AG04449 (cell line): ENCODE measurements at regions of chr12 and their contacts with region 1.

Region 1: DNA sequence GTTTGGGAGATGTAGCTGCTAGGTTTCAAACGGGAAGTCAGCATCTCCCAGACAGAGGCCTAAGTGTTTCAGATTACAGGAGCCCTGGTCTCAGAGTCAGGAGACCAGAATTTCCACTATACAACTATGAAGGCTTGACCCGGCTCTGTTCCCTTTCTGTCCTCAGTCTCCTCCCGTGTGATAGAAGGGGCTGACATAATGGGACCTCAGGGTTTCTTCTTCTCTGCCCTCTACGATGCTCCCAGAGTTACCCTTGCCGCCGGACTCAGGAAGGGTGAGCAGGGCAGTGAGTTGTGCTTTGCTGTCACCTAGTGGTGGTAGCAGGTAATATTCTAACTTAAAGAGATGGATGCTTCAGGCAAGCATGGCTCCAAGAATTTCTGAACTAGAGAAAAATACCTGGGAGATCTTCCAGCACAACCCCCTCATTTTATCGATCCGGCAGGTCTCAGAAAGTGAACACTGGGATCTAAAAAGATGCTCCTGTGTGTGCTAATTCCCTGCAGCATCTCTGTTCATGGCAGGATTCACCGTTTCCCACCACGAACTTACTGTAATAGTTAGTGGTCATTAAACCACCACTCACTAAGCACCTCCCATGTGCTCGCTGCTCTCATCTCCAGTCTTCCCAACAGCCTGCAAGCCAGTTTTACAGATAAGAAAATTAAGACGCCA is 84.4 kb downstream of the VWF start:
- DNase-seq: no peak
- H3K4me3 ChIP-seq: no peak overlapping the region
- CTCF ChIP-seq: peak; percentile 79

Region 2: GRCh38 chr12:5965950-5966383 is 74.1 kb before region 1 on chr12:
- CTCF ChIA-PET with region 1: interaction called, 63 read pairs
- POLR2A ChIA-PET with region 1: no interaction called
- DNase-seq: no peak
- H3K4me3 ChIP-seq: no peak overlapping the region
- CTCF ChIP-seq: peak; percentile 94

Region 3: GRCh38 chr12:5973461-5974130 is 66.4 kb before region 1 on chr12:
- CTCF ChIA-PET with region 1: interaction called, 57 read pairs
- POLR2A ChIA-PET with region 1: no interaction called
- DNase-seq: no peak
- H3K4me3 ChIP-seq: no peak overlapping the region
- CTCF ChIP-seq: no peak

Region 4: DNA sequence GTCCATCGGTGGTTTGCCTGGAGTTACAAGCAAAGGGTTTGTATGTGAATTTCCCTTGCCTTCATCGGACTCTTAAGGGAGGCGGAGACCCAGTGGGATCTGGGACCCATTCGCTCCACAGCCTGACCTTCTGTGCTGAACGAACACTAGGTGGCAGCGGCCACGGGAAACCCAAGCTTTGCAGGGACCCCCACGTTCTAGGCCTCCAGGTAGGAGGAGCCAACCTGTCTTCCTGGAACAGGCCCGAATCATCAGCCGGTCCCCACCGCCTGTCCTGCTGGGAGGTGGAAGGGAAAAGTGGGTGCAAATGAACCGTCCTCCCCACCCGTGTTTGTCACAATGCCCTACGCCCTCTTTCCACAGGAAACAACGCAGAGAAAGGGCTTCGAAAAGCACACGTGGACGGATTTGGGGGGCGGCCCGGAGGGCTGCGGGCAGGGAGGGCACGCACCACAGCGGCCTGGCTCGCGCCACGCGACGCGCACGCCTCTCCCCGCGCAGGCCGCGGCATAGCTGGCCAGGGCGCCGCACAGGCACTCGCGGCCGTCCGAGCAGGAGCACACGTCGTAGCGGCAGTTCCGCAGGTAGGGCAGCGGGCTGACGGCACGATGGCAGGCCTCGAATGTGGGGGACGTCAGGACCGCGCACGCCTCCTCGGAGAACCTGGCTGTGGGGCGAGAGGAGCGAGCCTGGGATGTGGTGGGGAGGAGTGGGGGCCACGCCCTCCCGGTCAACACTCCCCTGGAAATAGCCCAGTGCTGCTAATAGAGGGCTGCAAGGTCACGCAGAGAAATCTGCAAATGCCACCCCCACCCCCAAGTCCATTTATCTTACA is 16.6 kb after region 1 on chr12:
- CTCF ChIA-PET with region 1: interaction called, 34 read pairs
- POLR2A ChIA-PET with region 1: no interaction called
- DNase-seq: no peak
- H3K4me3 ChIP-seq: no peak overlapping the region
- CTCF ChIP-seq: peak; percentile 35